ENCODE measurements at regions of chr15 and their contacts with region 1.

Region 1: GRCh38 chr15:67120839-67121643 is 55.6 kb downstream of the SMAD3 start:
- DNase-seq: peak; percentile 90 to 94 (median 91)
- ATAC-seq: peak; percentile 80 to 93 (median 88)
- H3K4me3 ChIP-seq: peak overlapping the region in 9 of 12 donors; percentile 5 to 36 (median 19)
- H3K27ac ChIP-seq: peak overlapping the region; percentile 80 to 93 (median 88)
- H3K4me1 ChIP-seq: peaks cover 18 to 98% (median 69%) of the 10 kb centered on the region in 12 donors
- H3K27me3 ChIP-seq: no peaks in the 10 kb centered on the region
- CTCF ChIP-seq: no peak
- POLR2A ChIP-seq: no peak

Region 2: DNA sequence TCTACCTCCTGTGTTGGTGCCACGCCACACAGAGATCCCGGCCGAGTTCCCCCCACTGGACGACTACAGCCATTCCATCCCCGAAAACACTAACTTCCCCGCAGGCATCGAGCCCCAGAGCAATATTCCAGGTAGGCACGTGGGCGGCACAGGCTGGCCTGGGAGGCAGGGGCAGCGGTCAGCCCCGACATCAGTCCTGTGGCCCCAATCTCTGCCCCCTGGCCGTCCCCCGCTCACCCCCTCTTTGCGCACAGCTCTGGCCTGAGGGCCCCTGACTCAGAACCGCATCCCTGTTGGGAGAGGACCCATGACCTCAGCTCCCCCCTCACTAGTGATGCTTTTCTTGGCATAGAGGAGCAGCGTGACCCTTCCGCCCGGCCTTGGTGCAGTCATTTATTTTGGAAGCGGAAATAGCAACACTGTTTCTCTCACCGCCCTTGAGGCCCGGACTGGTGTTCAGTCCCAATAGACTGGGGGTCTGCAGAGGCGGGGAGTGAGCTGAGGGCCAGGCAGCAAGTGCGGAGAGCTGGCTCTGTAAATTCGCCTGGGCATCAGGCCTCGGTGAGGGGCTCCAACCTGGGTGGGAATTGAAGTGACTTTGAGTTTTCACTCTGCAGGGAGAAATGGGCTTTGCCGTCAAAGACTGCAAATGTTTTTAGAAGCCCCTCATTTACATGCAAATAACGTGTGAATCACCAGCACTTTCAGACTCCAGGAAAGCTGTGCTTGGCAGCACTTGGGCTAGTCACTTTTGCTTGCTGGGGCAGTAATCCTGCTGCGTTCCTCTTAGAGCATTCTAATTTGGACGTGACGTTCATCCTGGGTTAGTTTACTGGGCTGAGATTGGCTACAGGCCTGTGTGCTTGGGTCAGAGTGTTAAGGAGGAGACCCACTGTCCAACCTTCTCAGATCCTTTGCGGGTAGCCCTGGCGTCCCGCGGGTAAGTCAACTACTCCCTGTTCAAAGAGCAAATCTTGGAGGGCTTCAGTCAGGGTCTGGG is 44.5 kb after region 1 on chr15:
- intact Hi-C with region 1: loop called in 1 of 10 experiments (anchors 5 kb)
- DNase-seq: peak; percentile 66 to 78 (median 76)
- ATAC-seq: peak in 3 of 4 donors; percentile 61 to 73 (median 72)
- H3K4me3 ChIP-seq: no peak overlapping the region
- H3K27ac ChIP-seq: peak overlapping the region in 10 of 12 donors; percentile 29 to 72 (median 50)
- H3K4me1 ChIP-seq: peaks cover 0 to 68% (median 48%) of the 10 kb centered on the region in 12 donors
- H3K27me3 ChIP-seq: no peaks in the 10 kb centered on the region
- CTCF ChIP-seq: no peak
- POLR2A ChIP-seq: no peak

Region 3: DNA sequence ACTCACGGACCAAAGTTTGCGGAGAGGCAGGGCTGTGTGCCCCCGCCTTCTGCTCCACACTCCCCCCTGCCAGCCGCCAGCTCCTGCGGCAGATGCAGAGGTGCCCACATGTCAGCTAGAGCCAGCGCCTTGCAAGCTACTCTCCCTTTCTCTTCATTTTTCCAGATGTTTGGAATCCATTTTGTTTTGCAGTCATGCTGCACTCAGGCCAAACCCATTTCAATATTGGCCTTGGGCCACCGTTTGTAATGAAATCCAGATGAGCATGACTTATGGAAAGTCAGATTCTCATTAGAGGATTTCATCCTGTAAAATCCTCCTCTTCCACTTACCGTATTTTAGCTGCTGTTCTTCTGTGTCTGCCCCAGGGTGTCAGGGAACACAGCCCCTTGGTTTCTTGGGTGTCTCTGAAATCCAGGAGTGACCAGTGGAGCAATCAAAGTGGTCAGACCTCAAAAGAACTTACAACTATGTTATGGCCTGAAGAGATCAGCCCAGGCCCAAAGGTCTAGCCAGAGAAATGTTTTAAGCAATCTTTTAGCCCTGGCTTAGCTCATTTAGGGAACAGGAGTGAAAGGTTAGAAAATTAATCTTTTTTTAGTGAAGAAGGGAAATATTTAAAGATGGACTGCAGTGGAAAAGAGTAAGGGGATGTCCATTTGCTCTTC is 67.6 kb after region 1 on chr15:
- intact Hi-C with region 1: loop called in 1 of 10 experiments (anchors 10 kb)
- DNase-seq: peak in 2 of 5 donors; percentile 60 to 63
- ATAC-seq: no peak
- H3K4me3 ChIP-seq: no peak overlapping the region
- H3K27ac ChIP-seq: peak overlapping the region; percentile 66 to 98 (median 92)
- H3K4me1 ChIP-seq: peaks cover 12 to 70% (median 54%) of the 10 kb centered on the region in 12 donors
- H3K27me3 ChIP-seq: no peaks in the 10 kb centered on the region
- CTCF ChIP-seq: no peak
- POLR2A ChIP-seq: no peak

Region 4: DNA sequence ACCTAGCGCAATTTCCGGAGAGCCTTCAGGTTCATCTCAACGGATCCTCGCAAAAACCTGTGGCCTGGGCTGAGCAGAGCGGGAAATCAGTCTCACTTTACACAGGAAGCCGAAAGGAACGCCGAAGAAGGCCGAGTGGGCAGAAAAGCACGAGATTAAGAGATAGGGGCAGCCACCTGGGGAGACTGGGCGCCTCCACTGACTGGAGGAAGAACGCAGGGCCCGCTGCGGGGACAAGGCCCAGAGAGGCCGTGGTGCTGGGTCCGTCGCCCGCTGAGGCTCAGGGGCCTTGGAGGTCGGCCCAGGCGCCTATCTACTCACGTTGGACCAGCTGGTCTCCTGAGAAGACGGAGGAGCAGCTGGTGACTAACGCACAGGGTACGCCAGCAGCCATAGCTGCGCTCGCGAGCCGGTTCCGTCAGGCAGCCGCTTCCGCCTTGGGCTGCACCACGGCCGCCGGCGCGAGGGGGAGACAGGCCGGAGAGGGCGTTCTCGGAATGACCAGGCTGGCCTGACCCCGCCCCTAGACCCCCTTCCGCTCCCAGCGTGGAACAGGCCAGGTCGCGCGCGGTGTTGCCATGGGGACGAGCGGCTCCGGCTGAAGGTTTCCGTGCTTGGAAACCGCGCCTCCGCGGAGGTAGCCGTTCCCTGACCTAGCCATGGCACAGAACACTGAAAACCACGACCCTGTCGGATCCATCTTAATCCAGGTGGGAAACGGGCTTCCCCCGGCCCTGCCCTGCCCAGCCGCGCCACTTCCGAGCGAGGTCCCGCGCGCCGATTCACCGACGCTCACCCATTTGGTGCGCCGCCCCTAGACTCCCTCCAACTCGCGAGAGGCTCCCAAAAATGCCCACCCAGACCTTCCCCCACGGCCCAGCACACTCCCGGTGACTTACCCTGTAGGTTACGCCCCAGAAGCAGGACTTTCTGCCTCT is 133.5 kb after region 1 on chr15 and contains the starts of genes AAGAB and IQCH:
- intact Hi-C with region 1: loop called in 1 of 10 experiments (anchors 10 kb)
- DNase-seq: peak; percentile 97 to 100 (median 98)
- ATAC-seq: peak; percentile 99 to 100 (median 100)
- H3K4me3 ChIP-seq: peak within 1 kb of the TSS; percentile 73 to 97 (median 88)
- H3K27ac ChIP-seq: peak within 1 kb of the TSS; percentile 10 to 91 (median 81)
- H3K4me1 ChIP-seq: peaks cover 0 to 29% (median 12%) of the 10 kb centered on the region in 12 donors
- H3K27me3 ChIP-seq: no peaks in the 10 kb centered on the region
- CTCF ChIP-seq: peak in 3 of 12 donors; percentile 13 to 22 (median 22)
- POLR2A ChIP-seq: peak in 1 of 2 donors; percentile 76
- total RNA-seq, gene AAGAB: 16.4 to 32.4 (median 28.0) TPM
- total RNA-seq, gene IQCH: 0.24 to 3.3 (median 1.4) TPM

Measured in heart left ventricle (tissue), 16 donors.